Ascending aorta (tissue), 2 donors: ENCODE measurements at regions of chr7 and their contacts with region 1.

Region 1: GRCh38 chr7:101251871-101252659 is 7.2 kb upstream of the FIS1 start:
- DNase-seq: peak; percentile 87 to 98
- H3K4me3 ChIP-seq: peak overlapping the region; percentile 71 to 73
- H3K27ac ChIP-seq: peak overlapping the region; percentile 41 to 75
- H3K4me1 ChIP-seq: peaks cover 8 to 10% of the 10 kb centered on the region in 2 donors
- H3K27me3 ChIP-seq: no peaks in the 10 kb centered on the region
- CTCF ChIP-seq: no peak

Region 2: GRCh38 chr7:100837099-100837836 is 414.8 kb before region 1 on chr7:
- intact Hi-C with region 1: loop called (anchors 1 kb)
- DNase-seq: peak; percentile 56 to 93
- H3K4me3 ChIP-seq: peak overlapping the region; percentile 35 to 55
- H3K27ac ChIP-seq: peak overlapping the region; percentile 48 to 62
- H3K4me1 ChIP-seq: peaks cover 0 to 3% of the 10 kb centered on the region in 2 donors
- H3K27me3 ChIP-seq: no peaks in the 10 kb centered on the region
- CTCF ChIP-seq: no peak

Region 3: DNA sequence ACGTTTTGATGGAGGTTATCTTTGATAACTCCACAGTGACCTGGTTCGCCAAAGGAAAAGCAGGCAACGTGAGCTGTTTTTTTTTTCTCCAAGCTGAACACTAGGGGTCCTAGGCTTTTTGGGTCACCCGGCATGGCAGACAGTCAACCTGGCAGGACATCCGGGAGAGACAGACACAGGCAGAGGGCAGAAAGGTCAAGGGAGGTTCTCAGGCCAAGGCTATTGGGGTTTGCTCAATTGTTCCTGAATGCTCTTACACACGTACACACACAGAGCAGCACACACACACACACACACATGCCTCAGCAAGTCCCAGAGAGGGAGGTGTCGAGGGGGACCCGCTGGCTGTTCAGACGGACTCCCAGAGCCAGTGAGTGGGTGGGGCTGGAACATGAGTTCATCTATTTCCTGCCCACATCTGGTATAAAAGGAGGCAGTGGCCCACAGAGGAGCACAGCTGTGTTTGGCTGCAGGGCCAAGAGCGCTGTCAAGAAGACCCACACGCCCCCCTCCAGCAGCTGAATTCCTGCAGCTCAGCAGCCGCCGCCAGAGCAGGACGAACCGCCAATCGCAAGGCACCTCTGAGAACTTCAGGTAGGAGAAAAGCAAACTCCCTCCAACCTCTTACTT is 125.3 kb before region 1 on chr7 and contains the start of gene SERPINE1:
- intact Hi-C with region 1: no loop called
- DNase-seq: peak; percentile 93 to 99
- H3K4me3 ChIP-seq: peak within 1 kb of the TSS; percentile 56 to 71
- H3K27ac ChIP-seq: peak within 1 kb of the TSS; percentile 96 to 98
- H3K4me1 ChIP-seq: peaks cover 12 to 65% of the 10 kb centered on the region in 2 donors
- H3K27me3 ChIP-seq: no peaks in the 10 kb centered on the region
- CTCF ChIP-seq: peak in 1 of 3 experiments; percentile 24
- total RNA-seq, gene SERPINE1: 1,267 TPM

Region 4: GRCh38 chr7:101287032-101287431 is 35.0 kb after region 1 on chr7:
- intact Hi-C with region 1: loop called (anchors 1 kb)
- DNase-seq: no peak
- H3K4me3 ChIP-seq: no peak overlapping the region
- H3K27ac ChIP-seq: no peak overlapping the region
- H3K4me1 ChIP-seq: peaks cover 0 to 3% of the 10 kb centered on the region in 2 donors
- H3K27me3 ChIP-seq: no peaks in the 10 kb centered on the region
- CTCF ChIP-seq: no peak